CD4-positive, alpha-beta memory T cell (primary cell): ENCODE measurements at regions of chr1 and their contacts with region 1.

Region 1: GRCh38 chr1:9724706-9725476 is 73.4 kb downstream of the PIK3CD start:
- DNase-seq: peak; percentile 66 to 71 (median 69)
- H3K4me3 ChIP-seq: no peak overlapping the region
- H3K4me3 Mint-ChIP-seq: peak overlapping the region in 2 of 8 donors; percentile 7 to 68
- H3K27ac ChIP-seq: no peak overlapping the region
- H3K27ac Mint-ChIP-seq: peak overlapping the region; percentile 57 to 93 (median 78)
- H3K4me1 ChIP-seq: peaks cover 84% of the 10 kb centered on the region
- H3K4me1 Mint-ChIP-seq: peaks cover 26 to 80% (median 48%) of the 10 kb centered on the region in 4 donors
- H3K27me3 ChIP-seq: no peaks in the 10 kb centered on the region
- H3K27me3 Mint-ChIP-seq: no peaks in the 10 kb centered on the region

Region 2: DNA sequence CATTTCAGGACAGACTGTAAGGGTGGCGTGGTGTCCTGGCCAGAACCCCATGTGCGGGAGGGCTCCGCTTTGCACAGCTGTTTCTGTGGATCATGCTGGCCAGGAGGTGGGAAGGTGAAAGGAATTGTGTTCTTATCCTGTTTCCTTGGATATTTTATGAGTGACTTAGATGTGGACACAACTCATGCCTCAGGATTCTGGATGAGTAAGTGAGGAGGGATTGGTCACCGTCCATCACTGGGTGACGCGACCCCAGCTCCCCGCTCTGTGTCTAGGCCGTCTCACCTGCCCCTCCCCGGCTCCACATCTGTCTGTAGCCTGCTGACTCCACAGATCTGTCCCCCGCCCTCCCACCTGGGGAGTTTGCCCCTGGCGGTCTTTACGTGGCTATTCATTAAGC is 24.6 kb before region 1 on chr1:
- CTCF ChIA-PET with region 1: interaction called, 26 read pairs
- POLR2A ChIA-PET with region 1: interaction called, 3 read pairs
- intact Hi-C with region 1: no loop called
- DNase-seq: no peak
- H3K4me3 ChIP-seq: no peak overlapping the region
- H3K4me3 Mint-ChIP-seq: no peak overlapping the region
- H3K27ac ChIP-seq: no peak overlapping the region
- H3K27ac Mint-ChIP-seq: peak overlapping the region in 5 of 7 donors; percentile 46 to 80 (median 71)
- H3K4me1 ChIP-seq: peaks cover 59% of the 10 kb centered on the region
- H3K4me1 Mint-ChIP-seq: peaks cover 41 to 74% (median 57%) of the 10 kb centered on the region in 4 donors
- H3K27me3 ChIP-seq: no peaks in the 10 kb centered on the region
- H3K27me3 Mint-ChIP-seq: no peaks in the 10 kb centered on the region

Region 3: DNA sequence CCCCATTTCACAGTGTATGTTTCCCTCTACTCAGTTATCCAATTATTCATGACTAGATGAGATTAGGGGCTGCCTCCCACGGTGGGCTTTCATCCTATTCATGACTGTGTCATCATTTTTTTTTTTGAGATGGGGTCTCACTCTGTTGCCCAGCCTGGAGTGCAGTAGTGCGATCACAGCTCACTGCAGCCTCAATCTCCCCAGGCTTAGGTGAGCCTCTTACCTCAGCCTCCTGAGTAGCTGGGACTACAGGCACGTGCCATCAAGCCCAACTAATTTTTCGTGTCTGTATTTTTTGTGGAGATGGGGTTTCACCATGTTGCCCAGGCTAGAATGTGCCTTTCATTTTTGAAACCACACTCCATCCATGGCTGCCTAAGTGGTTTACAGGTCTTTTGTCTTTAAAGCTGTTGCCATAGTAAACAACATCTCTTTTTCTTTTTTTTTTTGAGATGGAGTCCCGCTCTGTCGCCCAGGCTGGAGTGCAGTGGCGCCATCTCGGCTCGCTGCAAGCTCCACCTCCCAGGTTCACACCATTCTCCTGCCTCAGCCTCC is 13.3 kb before region 1 on chr1:
- CTCF ChIA-PET with region 1: interaction called, 34 read pairs
- POLR2A ChIA-PET with region 1: interaction called, 187 read pairs
- intact Hi-C with region 1: no loop called
- DNase-seq: peak in 2 of 5 donors; percentile 33 to 48
- H3K4me3 ChIP-seq: no peak overlapping the region
- H3K4me3 Mint-ChIP-seq: peak overlapping the region in 2 of 8 donors; percentile 26 to 36
- H3K27ac ChIP-seq: no peak overlapping the region
- H3K27ac Mint-ChIP-seq: peak overlapping the region; percentile 35 to 76 (median 73)
- H3K4me1 ChIP-seq: peaks cover 55% of the 10 kb centered on the region
- H3K4me1 Mint-ChIP-seq: peaks cover 25 to 77% (median 48%) of the 10 kb centered on the region in 4 donors
- H3K27me3 ChIP-seq: no peaks in the 10 kb centered on the region
- H3K27me3 Mint-ChIP-seq: no peaks in the 10 kb centered on the region

Region 4: GRCh38 chr1:9867408-9868243 is 142.7 kb after region 1 on chr1:
- CTCF ChIA-PET with region 1: interaction called, 3 read pairs
- POLR2A ChIA-PET with region 1: no interaction called
- intact Hi-C with region 1: loop called (anchors 1 kb)
- DNase-seq: peak; percentile 81 to 86 (median 81)
- H3K4me3 ChIP-seq: no peak overlapping the region
- H3K4me3 Mint-ChIP-seq: no peak overlapping the region
- H3K27ac ChIP-seq: no peak overlapping the region
- H3K27ac Mint-ChIP-seq: peak overlapping the region in 1 of 7 donors; percentile 6
- H3K4me1 ChIP-seq: peaks cover 6% of the 10 kb centered on the region
- H3K4me1 Mint-ChIP-seq: peaks cover 0 to 4% (median 0%) of the 10 kb centered on the region in 4 donors
- H3K27me3 ChIP-seq: no peaks in the 10 kb centered on the region
- H3K27me3 Mint-ChIP-seq: no peaks in the 10 kb centered on the region

Region 5: DNA sequence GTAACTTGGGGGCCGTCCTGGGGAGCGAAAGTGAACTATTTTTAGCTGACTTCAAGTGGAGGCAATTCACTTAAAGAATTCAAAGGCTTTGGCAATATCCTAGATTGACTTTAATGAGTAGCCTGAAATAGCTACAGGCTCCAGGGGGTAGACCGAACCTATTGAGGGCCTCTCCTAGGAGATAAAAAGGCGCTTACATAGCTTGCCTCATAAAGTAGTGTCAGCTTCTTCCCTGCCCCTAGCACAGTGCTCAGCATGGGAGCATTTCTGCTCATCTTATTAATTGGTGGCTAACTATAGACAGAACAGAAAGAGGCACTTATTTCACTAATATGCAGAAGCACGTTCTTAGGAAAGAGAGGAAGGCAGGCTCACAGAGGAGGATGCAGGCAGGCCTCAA is 197.5 kb after region 1 on chr1:
- CTCF ChIA-PET with region 1: no interaction called
- POLR2A ChIA-PET with region 1: no interaction called
- intact Hi-C with region 1: no loop called
- DNase-seq: no peak
- H3K4me3 ChIP-seq: no peak overlapping the region
- H3K4me3 Mint-ChIP-seq: no peak overlapping the region
- H3K27ac ChIP-seq: no peak overlapping the region
- H3K27ac Mint-ChIP-seq: no peak overlapping the region
- H3K4me1 ChIP-seq: no peaks in the 10 kb centered on the region
- H3K4me1 Mint-ChIP-seq: peaks cover 0 to 1% (median 0%) of the 10 kb centered on the region in 4 donors
- H3K27me3 ChIP-seq: no peaks in the 10 kb centered on the region
- H3K27me3 Mint-ChIP-seq: no peaks in the 10 kb centered on the region